ENCODE measurements at regions of chr5 and their contacts with region 1.

Region 1: DNA sequence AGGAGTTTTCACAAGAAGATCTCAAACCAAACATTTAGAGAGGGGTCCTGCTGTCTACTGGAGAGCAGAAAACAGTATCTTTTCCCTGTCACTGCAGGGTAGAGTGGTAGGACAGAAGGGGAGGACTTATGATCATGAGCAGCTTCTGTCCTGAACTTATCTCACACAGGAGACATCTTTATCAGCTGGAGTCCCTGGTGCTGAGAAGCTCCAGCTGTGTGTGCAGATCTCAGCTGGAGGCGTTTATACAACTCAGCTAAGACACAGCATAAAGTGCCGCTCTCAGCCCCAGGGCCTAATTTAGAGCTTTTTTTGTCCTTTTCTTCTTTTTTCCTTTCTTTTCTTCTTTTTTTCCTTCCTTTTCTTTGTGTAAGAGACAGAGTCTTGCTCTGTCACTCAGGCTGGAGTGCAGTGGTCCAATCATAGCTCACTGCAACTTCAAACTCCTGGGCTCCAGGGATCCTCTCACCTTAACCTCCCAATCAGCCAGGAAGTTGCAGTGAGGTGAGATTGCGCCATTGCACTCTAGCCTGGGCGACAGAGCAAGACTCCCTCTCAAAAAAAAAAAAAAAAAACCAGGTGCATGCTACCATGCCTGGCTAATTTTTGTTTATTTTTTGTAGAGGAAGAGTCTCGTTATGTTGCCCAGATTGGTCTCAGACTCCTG is 31.9 kb downstream of the CCDC125 start:
- DNase-seq: no peak
- ATAC-seq: no peak

Region 2: DNA sequence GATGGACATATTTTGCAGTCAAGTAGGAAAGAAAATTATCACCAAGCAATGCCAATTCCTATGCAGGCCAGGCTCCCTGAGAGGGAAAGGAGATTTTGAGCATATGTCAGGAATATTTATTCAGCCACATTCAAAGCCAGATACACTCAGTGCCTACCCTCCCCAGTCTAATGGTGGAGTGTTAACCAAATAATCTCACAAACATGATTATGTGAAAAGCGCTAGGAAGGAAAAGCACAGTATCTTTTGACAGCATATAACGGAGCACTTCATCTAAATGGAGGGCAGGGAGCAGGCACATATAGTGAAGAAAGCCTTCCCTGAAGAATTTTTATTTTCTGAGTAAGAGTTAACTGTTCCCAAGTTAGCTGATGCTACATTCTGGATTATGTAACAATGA is 287.2 kb before region 1 on chr5:
- intact Hi-C with region 1: loop called in 1 of 2 experiments (anchors 10 kb)
- DNase-seq: no peak
- ATAC-seq: no peak

Region 3: DNA sequence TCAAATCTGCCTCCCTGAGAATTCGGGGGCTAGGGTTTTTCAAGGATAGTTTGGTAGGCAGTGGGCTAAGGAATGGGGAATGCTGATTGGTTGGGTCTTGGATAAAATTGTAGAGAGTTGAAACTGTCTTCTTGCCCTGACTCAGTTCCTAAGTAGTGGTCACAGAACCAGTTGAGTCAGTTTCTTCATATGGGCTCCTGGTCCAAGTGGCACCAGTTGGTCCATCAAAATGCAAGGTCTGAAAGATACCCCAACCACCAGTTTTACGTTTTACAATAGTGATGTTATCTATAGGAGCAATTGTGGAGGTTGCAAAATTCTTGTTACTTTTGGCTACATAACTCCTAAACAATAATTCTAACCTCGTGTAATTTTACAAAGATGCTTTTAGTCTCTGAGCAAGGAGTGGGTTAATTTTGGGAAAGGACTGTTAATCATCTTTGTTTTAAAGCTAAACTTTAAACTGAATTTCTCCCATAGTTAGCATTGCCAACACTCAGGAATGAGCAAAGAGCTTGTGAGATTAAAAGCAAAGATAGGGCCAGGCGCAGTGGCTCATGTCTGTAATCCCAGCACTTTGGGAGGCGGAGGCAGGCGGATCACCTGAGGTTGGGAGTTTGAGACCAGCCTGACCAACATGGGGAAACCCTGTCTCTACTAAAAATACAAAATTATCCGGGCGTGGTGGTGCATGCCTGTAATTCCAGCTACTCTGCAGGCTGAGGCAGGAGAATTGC is 58.3 kb before region 1 on chr5:
- intact Hi-C with region 1: loop called in 1 of 2 experiments (anchors 10 kb)
- DNase-seq: no peak
- ATAC-seq: no peak

Measured in left cardiac atrium (tissue), 4 donors.